Activated CD4-positive, alpha-beta memory T cell treated with anti-CD3 and anti-CD28 coated beads, Interleukin-2, amount 10 ng/mL, durations not matched to agents 7 days and 5 days (primary cell): ENCODE measurements at regions of chrX and their contacts with region 1.

Region 1: DNA sequence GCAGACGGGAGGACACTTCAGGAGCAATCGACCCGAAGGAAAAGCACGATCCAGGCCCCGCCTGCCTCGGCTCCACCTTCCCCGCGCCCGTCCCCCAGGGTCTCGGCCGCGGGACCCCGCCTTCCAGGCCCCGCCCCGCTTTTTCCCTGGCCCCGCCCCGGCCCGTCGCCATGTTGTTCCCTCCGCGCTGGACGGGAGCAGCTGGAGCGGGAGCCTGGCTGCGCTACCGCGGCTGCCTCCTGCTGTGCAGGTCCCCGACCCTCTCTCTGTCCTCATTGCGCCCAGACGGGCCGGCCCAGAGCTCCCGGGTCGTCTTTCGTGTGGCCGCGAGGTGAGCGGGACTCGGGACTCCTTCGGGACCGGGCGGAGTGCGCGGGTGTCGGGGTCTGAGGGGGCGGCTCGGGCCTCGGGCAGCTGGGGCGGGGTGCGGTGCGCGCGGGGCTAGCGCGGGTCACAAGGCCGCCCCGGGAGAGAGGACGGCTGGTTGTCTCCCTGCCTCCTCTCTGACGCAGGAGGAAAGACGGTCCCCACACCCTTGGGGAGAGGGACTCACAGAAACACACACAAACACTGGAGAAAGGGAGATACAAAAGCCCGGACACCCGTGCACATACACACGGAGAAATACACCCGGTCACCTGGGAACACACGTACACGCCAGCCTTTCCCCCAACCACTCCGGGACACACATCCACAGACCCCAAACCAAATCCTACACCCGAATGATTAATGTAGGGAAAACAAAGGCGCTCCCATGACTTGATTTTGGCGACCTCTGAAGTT is at the start of gene RAB9A:
- DNase-seq: peak; percentile 78
- H3K4me3 Mint-ChIP-seq: peak within 1 kb of the TSS; percentile 82
- H3K27ac Mint-ChIP-seq: peak within 1 kb of the TSS; percentile 75
- H3K4me1 Mint-ChIP-seq: peaks cover 54% of the 10 kb centered on the region
- H3K27me3 Mint-ChIP-seq: no peaks in the 10 kb centered on the region
- total RNA-seq, gene RAB9A: 16.8 to 17.5 TPM

Region 2: GRCh38 chrX:13569479-13570260 is 119.5 kb before region 1 on chrX and contains the start of gene EGFL6:
- CTCF ChIA-PET with region 1: no interaction called
- POLR2A ChIA-PET with region 1: no interaction called
- DNase-seq: no peak
- H3K4me3 Mint-ChIP-seq: peak within 1 kb of the TSS; percentile 40
- H3K27ac Mint-ChIP-seq: no peak within 1 kb of the TSS
- H3K4me1 Mint-ChIP-seq: peaks cover 35% of the 10 kb centered on the region
- H3K27me3 Mint-ChIP-seq: peaks cover 26% of the 10 kb centered on the region
- total RNA-seq, gene EGFL6: 3.3 to 3.8 TPM

Region 3: GRCh38 chrX:13662355-13662791 is 26.8 kb before region 1 on chrX:
- CTCF ChIA-PET with region 1: interaction called, 7 read pairs
- POLR2A ChIA-PET with region 1: interaction called, 13 read pairs
- DNase-seq: no peak
- H3K4me3 Mint-ChIP-seq: peak overlapping the region; percentile 43
- H3K27ac Mint-ChIP-seq: peak overlapping the region; percentile 67
- H3K4me1 Mint-ChIP-seq: peaks cover 26% of the 10 kb centered on the region
- H3K27me3 Mint-ChIP-seq: no peaks in the 10 kb centered on the region

Region 4: DNA sequence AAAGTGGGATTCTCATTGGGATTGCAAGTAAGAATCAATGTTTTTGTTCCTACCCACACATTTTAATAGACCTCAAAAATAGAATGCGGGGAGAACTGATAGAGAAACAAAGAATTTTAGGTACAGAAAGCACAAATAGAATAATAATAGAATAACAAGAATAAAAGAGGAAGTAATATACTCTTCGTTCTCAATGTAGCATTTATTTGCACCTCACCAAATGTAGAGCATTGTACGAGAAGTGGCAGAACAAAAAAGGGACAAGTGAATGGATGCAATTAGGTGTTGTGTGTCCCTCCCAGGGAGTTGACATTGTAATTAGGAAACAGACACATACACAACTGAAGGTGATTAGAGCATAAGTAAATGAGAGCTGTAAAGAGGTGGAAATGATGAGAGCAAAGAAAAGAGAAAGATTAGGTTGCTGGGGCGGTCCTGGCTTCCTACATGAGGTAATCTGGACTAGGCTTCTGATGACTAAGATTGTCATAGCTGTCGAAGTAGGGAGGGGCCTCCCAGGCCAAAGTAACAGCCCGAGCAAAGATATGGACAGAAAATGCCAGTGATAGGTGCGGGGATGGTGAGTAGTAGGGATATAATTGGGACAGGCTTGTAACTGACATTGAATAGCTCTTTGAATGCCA is 10.2 kb after region 1 on chrX:
- CTCF ChIA-PET with region 1: no interaction called
- POLR2A ChIA-PET with region 1: interaction called, 11 read pairs
- DNase-seq: no peak
- H3K4me3 Mint-ChIP-seq: no peak overlapping the region
- H3K27ac Mint-ChIP-seq: no peak overlapping the region
- H3K4me1 Mint-ChIP-seq: peaks cover 49% of the 10 kb centered on the region
- H3K27me3 Mint-ChIP-seq: no peaks in the 10 kb centered on the region